Transverse colon (tissue), 4 donors: ENCODE measurements at regions of chr2 and their contacts with region 1.

Region 1: GRCh38 chr2:157327621-157328500 is 2.2 kb upstream of the ERMN start:
- DNase-seq: peak; percentile 91
- H3K4me3 ChIP-seq: no peak overlapping the region
- H3K27ac ChIP-seq: peak overlapping the region in 2 of 4 donors; percentile 5 to 23
- H3K4me1 ChIP-seq: peaks cover 0 to 35% (median 17%) of the 10 kb centered on the region in 4 donors
- H3K27me3 ChIP-seq: no peaks in the 10 kb centered on the region
- CTCF ChIP-seq: peak; percentile 83 to 94 (median 92)
- EP300 ChIP-seq: no peak
- POLR2A ChIP-seq: no peak

Region 2: DNA sequence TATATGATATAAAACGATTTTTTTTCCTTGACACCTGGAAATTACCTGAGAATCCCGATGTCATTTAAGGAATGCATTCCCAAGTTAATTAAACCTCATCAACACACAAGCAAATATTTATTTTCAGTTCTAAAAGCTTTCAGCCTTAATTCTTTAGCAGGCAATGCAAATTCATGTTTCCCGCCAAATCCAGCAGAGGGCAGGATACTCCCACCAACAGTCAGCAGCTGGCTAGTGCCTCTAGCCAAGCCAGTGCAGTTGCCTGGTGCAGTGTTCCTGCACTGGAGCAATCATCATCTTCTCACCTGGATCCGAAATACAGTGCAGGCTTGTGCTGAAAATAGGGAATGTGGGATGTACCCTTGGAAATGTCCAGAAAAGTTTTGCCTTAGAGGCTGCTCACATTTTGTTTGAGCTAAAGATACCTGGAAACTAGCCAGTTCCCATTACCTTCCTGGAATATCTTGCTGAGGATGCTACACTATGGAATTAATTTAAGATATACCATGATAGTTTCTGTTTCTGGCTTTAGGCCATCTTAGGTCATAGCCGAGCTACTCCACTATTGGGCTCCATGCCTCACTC is 164.4 kb after region 1 on chr2:
- in situ Hi-C with region 1: loop called in 2 of 4 experiments (anchors 10 to 25 kb)
- intact Hi-C with region 1: no loop called
- DNase-seq: peak; percentile 77
- H3K4me3 ChIP-seq: no peak overlapping the region
- H3K27ac ChIP-seq: no peak overlapping the region
- H3K4me1 ChIP-seq: peaks cover 0 to 5% (median 3%) of the 10 kb centered on the region in 4 donors
- H3K27me3 ChIP-seq: no peaks in the 10 kb centered on the region
- CTCF ChIP-seq: peak; percentile 52 to 76 (median 67)
- EP300 ChIP-seq: no peak
- POLR2A ChIP-seq: no peak

Region 3: DNA sequence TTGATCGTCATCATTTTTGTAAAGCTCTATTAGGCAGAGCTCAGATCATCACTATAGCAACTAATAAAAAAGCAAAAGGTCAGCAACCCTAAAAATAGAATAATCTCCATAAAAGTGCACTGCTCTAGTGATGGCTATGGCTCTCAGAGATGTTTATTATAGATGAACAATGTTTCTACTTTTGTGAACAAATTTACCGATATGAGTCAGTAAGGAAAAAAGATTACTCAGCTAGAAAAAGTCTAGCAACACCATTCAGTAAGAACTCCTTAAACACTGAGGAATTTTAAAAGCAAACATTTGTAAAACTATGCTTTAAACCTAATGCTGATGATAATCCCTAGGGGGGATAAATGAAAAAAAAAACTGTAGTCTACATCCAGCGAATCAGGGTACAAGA is 231.2 kb after region 1 on chr2:
- in situ Hi-C with region 1: no loop called
- intact Hi-C with region 1: no loop called
- DNase-seq: no peak
- H3K4me3 ChIP-seq: no peak overlapping the region
- H3K27ac ChIP-seq: no peak overlapping the region
- H3K4me1 ChIP-seq: peaks cover 0 to 14% (median 3%) of the 10 kb centered on the region in 4 donors
- H3K27me3 ChIP-seq: no peaks in the 10 kb centered on the region
- CTCF ChIP-seq: no peak
- EP300 ChIP-seq: no peak
- POLR2A ChIP-seq: no peak